IMR-90 (cell line): ENCODE measurements at regions of chr7 and their contacts with region 1.

Region 1: GRCh38 chr7:17769918-17770317 is 170.4 kb downstream of the SNX13 start:
- DNase-seq: peak; percentile 75
- ATAC-seq: peak; percentile 77
- H3K4me3 ChIP-seq: no peak overlapping the region
- H3K27ac ChIP-seq: no peak overlapping the region
- H3K4me1 ChIP-seq: no peaks in the 10 kb centered on the region; the same call in 1 of the 2 replicates
- H3K27me3 ChIP-seq: no peaks in the 10 kb centered on the region
- CTCF ChIP-seq: peak; percentile 83
- POLR2A ChIP-seq: no peak
- RAD21 ChIP-seq: peak; percentile 89

Region 2: GRCh38 chr7:17939606-17940301 is 169.8 kb after region 1 on chr7:
- CTCF ChIA-PET with region 1: no interaction called
- POLR2A ChIA-PET with region 1: no interaction called
- dilution Hi-C with region 1: no loop called
- in situ Hi-C with region 1: no loop called
- intact Hi-C with region 1: loop called (anchors 1 kb)
- DNase-seq: peak; percentile 23
- ATAC-seq: peak; percentile 55
- H3K4me3 ChIP-seq: peak overlapping the region; percentile 87
- H3K27ac ChIP-seq: peak overlapping the region; percentile 94
- H3K4me1 ChIP-seq: no peaks in the 10 kb centered on the region
- H3K27me3 ChIP-seq: no peaks in the 10 kb centered on the region
- CTCF ChIP-seq: no peak
- POLR2A ChIP-seq: no peak
- RAD21 ChIP-seq: no peak

Region 3: GRCh38 chr7:18119985-18120384 is 350.1 kb after region 1 on chr7:
- CTCF ChIA-PET with region 1: interaction called, 6 read pairs
- POLR2A ChIA-PET with region 1: no interaction called
- dilution Hi-C with region 1: no loop called
- in situ Hi-C with region 1: no loop called
- intact Hi-C with region 1: loop called (anchors 1 kb)
- DNase-seq: peak; percentile 19
- ATAC-seq: peak; percentile 60
- H3K4me3 ChIP-seq: no peak overlapping the region
- H3K27ac ChIP-seq: no peak overlapping the region
- H3K4me1 ChIP-seq: no peaks in the 10 kb centered on the region
- H3K27me3 ChIP-seq: peaks cover 1% of the 10 kb centered on the region; the same call in 1 of the 2 replicates
- CTCF ChIP-seq: peak; percentile 36
- POLR2A ChIP-seq: no peak
- RAD21 ChIP-seq: peak; percentile 53

Region 4: DNA sequence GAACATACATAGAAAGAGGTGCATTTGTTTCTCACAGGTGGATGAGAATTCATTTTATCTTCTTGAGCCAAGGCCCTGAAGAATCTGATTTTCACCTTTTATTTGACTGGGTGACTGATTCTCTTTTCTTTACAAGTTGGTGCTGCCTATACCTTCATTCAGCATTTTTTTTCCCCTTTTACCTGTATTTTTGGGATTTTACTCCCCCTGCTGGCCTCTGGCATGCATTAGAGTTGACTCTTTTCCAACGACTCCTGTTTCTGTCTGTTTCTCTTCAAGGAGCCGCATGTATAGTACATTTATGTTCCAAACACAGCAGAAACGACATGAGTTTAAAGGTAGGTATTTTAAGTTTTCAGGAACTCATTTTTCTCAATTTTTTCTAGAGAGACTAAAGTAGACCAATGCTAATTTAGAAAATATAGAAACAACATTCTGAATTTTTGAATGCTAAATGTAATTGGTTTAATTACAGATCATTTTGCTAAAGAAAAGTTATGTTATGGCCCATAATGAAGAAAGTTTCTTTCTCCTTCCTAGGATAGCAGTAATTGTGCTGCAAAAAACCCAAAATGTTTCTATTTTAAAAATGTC is 575.8 kb after region 1 on chr7:
- CTCF ChIA-PET with region 1: interaction called, 5 read pairs
- POLR2A ChIA-PET with region 1: no interaction called
- dilution Hi-C with region 1: no loop called
- in situ Hi-C with region 1: loop called (anchors 10 kb)
- intact Hi-C with region 1: loop called (anchors 1 kb)
- DNase-seq: peak; percentile 46
- ATAC-seq: peak; percentile 49; the same call in 1 of the 2 replicates
- H3K4me3 ChIP-seq: no peak overlapping the region
- H3K27ac ChIP-seq: no peak overlapping the region
- H3K4me1 ChIP-seq: no peaks in the 10 kb centered on the region
- H3K27me3 ChIP-seq: no peaks in the 10 kb centered on the region
- CTCF ChIP-seq: peak; percentile 78
- POLR2A ChIP-seq: no peak
- RAD21 ChIP-seq: peak; percentile 73